ENCODE measurements at regions of chr9 and their contacts with region 1.

Region 1: DNA sequence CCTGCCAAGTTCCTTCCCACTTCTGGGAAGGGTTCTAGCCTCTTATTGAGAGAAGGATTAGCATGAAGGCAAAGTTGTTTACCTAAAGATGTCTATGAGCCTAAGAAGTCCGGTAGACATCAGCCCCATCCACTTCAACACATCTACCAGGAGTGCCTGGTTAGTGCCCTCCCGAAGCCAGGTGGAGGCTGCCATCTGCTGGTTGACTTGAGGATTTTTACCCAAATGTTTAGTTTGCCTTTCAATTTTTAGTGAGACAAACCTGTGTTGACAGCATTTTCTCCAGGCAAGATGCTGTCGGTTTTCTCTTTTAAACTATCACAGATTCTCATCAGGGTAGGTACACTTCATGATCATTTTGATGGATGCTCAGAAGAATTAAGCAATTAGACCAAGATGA is 83.6 kb upstream of the TNFSF8 start:
- DNase-seq: peak; percentile 57 to 75 (median 64)
- ATAC-seq: peak; percentile 65 to 80 (median 72)
- H3K4me3 ChIP-seq: no peak overlapping the region
- H3K27ac ChIP-seq: no peak overlapping the region
- H3K4me1 ChIP-seq: peaks cover 0 to 6% (median 0%) of the 10 kb centered on the region in 12 donors
- H3K27me3 ChIP-seq: peaks cover 0 to 21% (median 0%) of the 10 kb centered on the region in 9 donors
- CTCF ChIP-seq: peak; percentile 61 to 86 (median 76)
- POLR2A ChIP-seq: no peak

Region 2: DNA sequence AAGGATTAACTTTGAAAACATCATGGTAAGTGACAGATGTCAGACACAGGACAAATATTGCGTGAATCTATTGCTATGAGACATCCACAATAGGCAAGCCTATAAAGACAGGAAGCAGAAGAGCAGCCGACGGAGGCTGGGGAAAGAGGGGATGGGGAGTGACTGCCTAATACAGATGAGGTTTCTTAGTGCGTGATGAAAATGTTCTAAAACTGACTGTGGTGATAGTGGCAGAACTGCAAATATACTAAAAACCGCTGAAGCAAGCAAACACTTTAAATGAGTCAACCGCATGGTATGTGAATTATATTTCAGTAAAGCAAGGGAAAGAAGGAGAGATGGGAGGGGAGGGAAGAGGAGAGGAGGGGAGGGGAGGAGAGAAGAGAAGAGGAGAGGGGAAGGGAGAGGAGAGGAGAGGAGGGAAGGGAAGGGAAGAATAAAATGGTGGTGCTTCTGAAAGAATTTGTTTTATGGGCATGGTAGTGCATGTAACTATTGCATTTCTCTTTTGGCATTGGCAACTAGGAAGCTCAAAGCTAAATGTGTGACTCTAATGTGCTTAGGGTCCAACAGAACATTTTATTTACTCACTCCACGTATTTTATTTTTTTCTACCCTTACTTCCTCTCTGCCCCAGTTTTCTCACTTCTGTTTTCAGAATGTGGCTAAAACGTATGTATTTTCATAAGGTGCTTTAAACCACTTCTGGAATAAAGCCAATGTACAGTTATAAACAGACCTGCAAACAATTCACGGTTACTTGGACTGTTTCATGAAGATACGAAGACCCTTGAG is 647.5 kb before region 1 on chr9:
- intact Hi-C with region 1: no loop called
- DNase-seq: no peak
- ATAC-seq: no peak
- H3K4me3 ChIP-seq: no peak overlapping the region
- H3K27ac ChIP-seq: peak overlapping the region in 2 of 12 donors; percentile 3 to 83
- H3K4me1 ChIP-seq: peaks cover 0 to 80% (median 0%) of the 10 kb centered on the region in 12 donors
- H3K27me3 ChIP-seq: no peaks in the 10 kb centered on the region
- CTCF ChIP-seq: no peak
- POLR2A ChIP-seq: no peak

Region 3: GRCh38 chr9:114405294-114406034 is 608.5 kb before region 1 on chr9:
- intact Hi-C with region 1: loop called (anchors 2 to 5 kb)
- DNase-seq: peak; percentile 73 to 81 (median 79)
- ATAC-seq: peak; percentile 76 to 95 (median 92)
- H3K4me3 ChIP-seq: no peak overlapping the region
- H3K27ac ChIP-seq: no peak overlapping the region
- H3K4me1 ChIP-seq: peaks cover 0 to 7% (median 0%) of the 10 kb centered on the region in 12 donors
- H3K27me3 ChIP-seq: no peaks in the 10 kb centered on the region
- CTCF ChIP-seq: peak; percentile 72 to 87 (median 82)
- POLR2A ChIP-seq: no peak

Region 4: DNA sequence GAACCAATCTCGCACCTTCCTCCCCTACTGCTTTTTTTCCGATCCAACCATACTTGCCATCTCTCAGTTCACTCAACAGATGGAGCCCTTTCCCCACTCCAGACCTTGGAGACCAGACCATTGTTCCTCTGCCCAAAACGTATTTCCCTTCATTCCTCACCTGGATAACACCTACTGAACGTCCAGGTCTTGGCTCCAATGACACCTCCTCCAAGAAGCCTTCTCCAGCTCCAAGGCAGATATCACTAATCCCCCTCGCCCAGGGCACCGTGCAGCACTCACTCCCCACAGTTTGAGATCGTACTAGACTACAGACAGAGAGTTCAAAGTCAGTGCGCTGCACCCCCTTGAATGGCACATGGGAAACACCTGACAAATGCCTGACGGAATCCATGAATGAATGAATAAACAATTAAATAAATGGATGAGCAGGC is 579.1 kb before region 1 on chr9:
- intact Hi-C with region 1: loop called in 3 of 10 experiments (anchors 5 to 10 kb)
- DNase-seq: no peak
- ATAC-seq: peak in 2 of 4 donors; percentile 36 to 41
- H3K4me3 ChIP-seq: no peak overlapping the region
- H3K27ac ChIP-seq: no peak overlapping the region
- H3K4me1 ChIP-seq: no peaks in the 10 kb centered on the region
- H3K27me3 ChIP-seq: peaks cover 0 to 11% (median 3%) of the 10 kb centered on the region in 9 donors
- CTCF ChIP-seq: peak; percentile 11 to 58 (median 38)
- POLR2A ChIP-seq: no peak

Region 5: GRCh38 chr9:114662081-114662989 is 351.7 kb before region 1 on chr9:
- intact Hi-C with region 1: loop called in 9 of 10 experiments (anchors 1 to 10 kb)
- DNase-seq: peak in 2 of 5 donors; percentile 16 to 26
- ATAC-seq: peak in 3 of 4 donors; percentile 54 to 69 (median 67)
- H3K4me3 ChIP-seq: no peak overlapping the region
- H3K27ac ChIP-seq: no peak overlapping the region
- H3K4me1 ChIP-seq: no peaks in the 10 kb centered on the region
- H3K27me3 ChIP-seq: peaks cover 0 to 24% (median 6%) of the 10 kb centered on the region in 9 donors
- CTCF ChIP-seq: peak; percentile 52 to 77 (median 70)
- POLR2A ChIP-seq: no peak

Region 6: GRCh38 chr9:114738581-114739316 is 275.2 kb before region 1 on chr9:
- intact Hi-C with region 1: loop called (anchors 2 to 10 kb)
- DNase-seq: peak; percentile 52 to 75 (median 60)
- ATAC-seq: peak in 3 of 4 donors; percentile 86 to 92 (median 87)
- H3K4me3 ChIP-seq: no peak overlapping the region
- H3K27ac ChIP-seq: no peak overlapping the region
- H3K4me1 ChIP-seq: peaks cover 0 to 24% (median 0%) of the 10 kb centered on the region in 12 donors
- H3K27me3 ChIP-seq: peaks cover 0 to 6% (median 0%) of the 10 kb centered on the region in 9 donors
- CTCF ChIP-seq: peak; percentile 49 to 86 (median 70)
- POLR2A ChIP-seq: no peak

Region 7: GRCh38 chr9:114906908-114907571 is 107.0 kb before region 1 on chr9:
- intact Hi-C with region 1: loop called in 6 of 10 experiments (anchors 5 to 10 kb)
- DNase-seq: no peak
- ATAC-seq: peak in 1 of 4 donors; percentile 24
- H3K4me3 ChIP-seq: no peak overlapping the region
- H3K27ac ChIP-seq: peak overlapping the region in 1 of 12 donors; percentile 76
- H3K4me1 ChIP-seq: peaks cover 0 to 23% (median 0%) of the 10 kb centered on the region in 12 donors
- H3K27me3 ChIP-seq: peaks cover 0 to 15% (median 0%) of the 10 kb centered on the region in 9 donors
- CTCF ChIP-seq: peak in 9 of 12 donors; percentile 18 to 45 (median 37)
- POLR2A ChIP-seq: no peak

Region 8: GRCh38 chr9:115524453-115525059 is 510.6 kb after region 1 on chr9:
- intact Hi-C with region 1: loop called in 3 of 10 experiments (anchors 10 kb)
- DNase-seq: peak in 1 of 5 donors; percentile 19
- ATAC-seq: peak in 3 of 4 donors; percentile 42 to 58 (median 44)
- H3K4me3 ChIP-seq: no peak overlapping the region
- H3K27ac ChIP-seq: peak overlapping the region in 1 of 12 donors; percentile 35
- H3K4me1 ChIP-seq: peaks cover 0 to 7% (median 0%) of the 10 kb centered on the region in 12 donors
- H3K27me3 ChIP-seq: no peaks in the 10 kb centered on the region
- CTCF ChIP-seq: peak; percentile 31 to 73 (median 51)
- POLR2A ChIP-seq: no peak